CD4-positive, alpha-beta memory T cell (primary cell): ENCODE measurements at regions of chr5 and their contacts with region 1.

Region 1: DNA sequence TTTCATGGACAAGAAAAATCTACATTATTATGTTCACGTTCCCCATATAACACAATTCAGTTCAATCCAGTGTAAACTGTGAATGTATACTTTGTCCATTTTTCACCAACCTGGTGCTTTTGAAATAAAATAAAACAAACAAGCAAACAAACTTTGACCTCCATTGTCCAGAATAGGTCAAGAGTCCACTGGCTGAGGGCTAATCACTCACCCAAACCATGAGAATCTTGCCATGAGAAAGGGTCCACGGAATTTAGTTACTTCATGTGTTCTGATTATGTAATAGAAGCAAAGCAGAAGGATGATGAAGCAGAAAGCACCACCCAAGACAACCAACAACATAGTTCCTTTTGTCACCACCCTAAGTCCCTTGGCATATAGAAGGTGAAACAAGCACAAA is 28.7 kb downstream of the DIAPH1 start:
- DNase-seq: no peak
- H3K4me3 ChIP-seq: no peak overlapping the region
- H3K4me3 Mint-ChIP-seq: peak overlapping the region in 1 of 8 donors; percentile 3
- H3K27ac ChIP-seq: no peak overlapping the region
- H3K27ac Mint-ChIP-seq: peak overlapping the region in 3 of 7 donors; percentile 13 to 59 (median 43)
- H3K4me1 ChIP-seq: peaks cover 52% of the 10 kb centered on the region
- H3K4me1 Mint-ChIP-seq: peaks cover 45 to 70% (median 55%) of the 10 kb centered on the region in 4 donors
- H3K27me3 ChIP-seq: no peaks in the 10 kb centered on the region
- H3K27me3 Mint-ChIP-seq: no peaks in the 10 kb centered on the region

Region 2: GRCh38 chr5:141605523-141606277 is 15.6 kb after region 1 on chr5:
- CTCF ChIA-PET with region 1: interaction called, 169 read pairs
- POLR2A ChIA-PET with region 1: interaction called, 53 read pairs
- intact Hi-C with region 1: loop called (anchors 1 kb)
- DNase-seq: peak; percentile 85 to 93 (median 87)
- H3K4me3 ChIP-seq: peak overlapping the region; percentile 13 to 34
- H3K4me3 Mint-ChIP-seq: peak overlapping the region; percentile 67 to 87 (median 81)
- H3K27ac ChIP-seq: peak overlapping the region; percentile 72
- H3K27ac Mint-ChIP-seq: peak overlapping the region; percentile 89 to 95 (median 93)
- H3K4me1 ChIP-seq: peaks cover 97% of the 10 kb centered on the region
- H3K4me1 Mint-ChIP-seq: peaks cover 62 to 95% (median 79%) of the 10 kb centered on the region in 4 donors
- H3K27me3 ChIP-seq: no peaks in the 10 kb centered on the region
- H3K27me3 Mint-ChIP-seq: no peaks in the 10 kb centered on the region